ENCODE measurements at regions of chr12 and their contacts with region 1.

Region 1: DNA sequence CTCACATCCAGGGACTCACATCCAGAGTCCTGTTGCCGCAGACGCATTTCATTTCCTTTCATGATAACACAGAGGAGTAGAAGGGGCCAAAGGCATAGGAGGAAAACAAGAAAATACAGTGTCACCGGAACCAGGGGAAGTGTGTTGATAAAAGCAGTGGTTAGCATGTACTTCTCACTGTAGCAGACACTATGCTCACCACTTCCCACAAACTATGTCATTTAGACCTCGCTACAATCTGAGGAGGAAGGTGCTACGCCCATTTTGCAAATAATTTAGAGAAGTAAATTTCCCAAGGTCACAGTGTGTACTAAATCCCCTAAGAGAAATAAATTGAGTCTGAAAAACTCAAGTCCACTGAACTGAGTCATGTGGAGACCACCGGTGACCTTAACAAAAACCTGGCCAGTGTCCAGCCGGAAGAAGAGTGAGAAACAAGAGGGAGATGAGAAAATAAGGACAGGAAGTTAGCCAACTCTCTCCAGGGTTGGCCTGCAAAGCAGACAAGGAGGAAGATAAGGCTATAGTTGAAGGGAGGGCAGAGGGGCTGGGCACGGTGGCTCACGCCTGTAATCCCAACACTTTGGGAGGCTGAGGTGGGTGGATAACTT is 25.8 kb upstream of the TMCC3 start:
- H3K4me3 Mint-ChIP-seq: peak overlapping the region; percentile 66
- H3K27ac Mint-ChIP-seq: peak overlapping the region; percentile 91
- H3K4me1 Mint-ChIP-seq: peaks cover 55% of the 10 kb centered on the region
- H3K27me3 Mint-ChIP-seq: no peaks in the 10 kb centered on the region

Region 2: GRCh38 chr12:94644141-94644979 is 31.8 kb before region 1 on chr12:
- intact Hi-C with region 1: loop called (anchors 5 kb)
- H3K4me3 Mint-ChIP-seq: peak overlapping the region; percentile 61
- H3K27ac Mint-ChIP-seq: peak overlapping the region; percentile 79
- H3K4me1 Mint-ChIP-seq: peaks cover 56% of the 10 kb centered on the region
- H3K27me3 Mint-ChIP-seq: peaks cover 32% of the 10 kb centered on the region